HEK293 (cell line): ENCODE measurements at regions of chr17 and their contacts with region 1.

Region 1: DNA sequence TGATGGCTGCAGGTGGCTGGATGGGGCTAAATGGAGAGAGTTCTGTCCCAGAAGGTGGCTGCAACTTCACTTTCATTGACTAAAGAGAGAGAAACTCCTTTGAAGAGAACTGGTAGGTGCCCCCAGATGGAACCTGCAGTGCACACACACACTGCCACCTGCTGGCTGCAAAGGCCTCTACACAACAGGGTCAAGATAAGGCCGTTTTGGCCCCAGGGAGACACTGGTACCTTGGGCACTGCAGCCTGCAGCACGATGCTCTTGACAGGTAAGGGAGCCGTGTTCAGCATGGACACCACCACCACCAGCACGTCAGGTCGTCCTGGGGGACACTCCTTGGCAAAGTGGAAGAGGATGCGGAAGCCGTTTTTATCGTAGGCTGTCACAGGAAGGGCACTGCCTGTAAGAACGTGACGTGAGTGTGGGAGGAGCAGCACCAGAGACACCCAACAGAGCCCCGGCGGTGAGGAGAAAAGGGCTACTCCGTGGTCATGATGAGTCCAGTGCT is 22.7 kb downstream of the GGA3 start:
- H3K4me3 ChIP-seq: no peak overlapping the region
- H3K27ac ChIP-seq: no peak overlapping the region
- H3K4me1 ChIP-seq: no peaks in the 10 kb centered on the region
- CTCF ChIP-seq: peak; percentile 86

Region 2: DNA sequence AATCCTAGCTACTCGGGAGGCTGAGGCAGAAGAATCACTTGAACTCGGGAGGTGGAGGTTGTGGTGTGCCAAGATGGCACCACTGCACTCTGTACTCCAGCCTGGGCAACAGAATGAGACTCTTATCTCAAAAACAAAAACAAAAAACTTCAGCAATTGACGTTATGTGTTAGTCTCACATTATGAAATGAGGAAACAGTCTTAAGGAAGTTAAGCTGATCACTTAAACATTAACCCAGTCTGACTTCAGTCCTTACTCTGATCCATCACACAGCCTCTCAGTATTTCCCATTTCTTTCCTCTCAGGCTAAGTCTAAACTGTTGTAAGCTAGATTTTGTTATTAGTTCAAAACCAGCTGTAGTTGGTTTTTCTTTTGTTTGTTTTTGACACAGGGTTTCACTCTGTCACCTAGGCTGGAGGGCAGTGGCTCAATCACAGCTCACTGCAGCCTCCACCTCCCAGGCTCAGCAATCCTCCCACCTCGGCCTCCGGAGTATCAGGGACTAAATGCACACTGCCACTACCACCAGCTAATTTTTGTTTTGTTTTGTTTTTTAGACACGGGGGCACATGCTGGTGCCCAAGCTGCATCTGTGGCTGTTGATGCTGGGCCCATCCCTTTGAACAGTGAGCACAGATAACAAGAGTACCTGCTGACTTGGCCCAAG is 90.7 kb before region 1 on chr17:
- CTCF ChIA-PET with region 1: no interaction called
- POLR2A ChIA-PET with region 1: no interaction called
- H3K4me3 ChIP-seq: no peak overlapping the region
- H3K27ac ChIP-seq: no peak overlapping the region
- H3K4me1 ChIP-seq: peaks cover 4% of the 10 kb centered on the region; the same call in 1 of the 2 replicates
- CTCF ChIP-seq: no peak

Region 3: GRCh38 chr17:75219815-75220214 is 18.9 kb before region 1 on chr17:
- CTCF ChIA-PET with region 1: interaction called, 21 read pairs
- POLR2A ChIA-PET with region 1: interaction called, 3 read pairs
- H3K4me3 ChIP-seq: no peak overlapping the region
- H3K27ac ChIP-seq: no peak overlapping the region
- H3K4me1 ChIP-seq: no peaks in the 10 kb centered on the region
- CTCF ChIP-seq: no peak

Region 4: GRCh38 chr17:75228305-75228704 is 10.4 kb before region 1 on chr17:
- CTCF ChIA-PET with region 1: interaction called, 54 read pairs
- POLR2A ChIA-PET with region 1: interaction called, 16 read pairs
- H3K4me3 ChIP-seq: no peak overlapping the region
- H3K27ac ChIP-seq: no peak overlapping the region
- H3K4me1 ChIP-seq: no peaks in the 10 kb centered on the region
- CTCF ChIP-seq: no peak

Region 5: DNA sequence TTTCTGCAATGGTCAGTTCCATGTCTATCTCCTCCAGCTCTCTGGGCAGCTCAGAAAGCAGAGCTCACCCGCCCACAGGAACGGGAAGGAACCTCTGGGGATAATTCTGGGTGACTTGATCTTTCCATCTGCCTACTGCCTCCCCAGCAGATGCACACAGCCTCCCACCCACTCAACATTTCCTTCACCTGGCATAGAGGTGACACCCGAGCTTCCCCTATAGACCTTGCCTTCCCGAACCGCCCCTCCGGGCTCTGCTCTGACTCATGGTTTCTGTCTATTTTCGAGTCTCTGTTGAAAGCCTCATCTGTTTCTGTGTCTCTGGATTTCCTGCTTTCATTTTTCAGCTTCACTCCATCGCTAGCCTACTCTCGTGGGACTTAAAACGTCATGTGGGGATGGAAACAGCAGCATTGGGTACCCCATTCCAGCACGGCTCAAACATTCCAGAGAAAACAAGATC is 11.3 kb after region 1 on chr17:
- CTCF ChIA-PET with region 1: interaction called, 71 read pairs
- POLR2A ChIA-PET with region 1: interaction called, 4 read pairs
- H3K4me3 ChIP-seq: no peak overlapping the region
- H3K27ac ChIP-seq: peak overlapping the region; percentile 3; the same call in 1 of the 2 replicates
- H3K4me1 ChIP-seq: peaks cover 6% of the 10 kb centered on the region
- CTCF ChIP-seq: no peak

Region 6: DNA sequence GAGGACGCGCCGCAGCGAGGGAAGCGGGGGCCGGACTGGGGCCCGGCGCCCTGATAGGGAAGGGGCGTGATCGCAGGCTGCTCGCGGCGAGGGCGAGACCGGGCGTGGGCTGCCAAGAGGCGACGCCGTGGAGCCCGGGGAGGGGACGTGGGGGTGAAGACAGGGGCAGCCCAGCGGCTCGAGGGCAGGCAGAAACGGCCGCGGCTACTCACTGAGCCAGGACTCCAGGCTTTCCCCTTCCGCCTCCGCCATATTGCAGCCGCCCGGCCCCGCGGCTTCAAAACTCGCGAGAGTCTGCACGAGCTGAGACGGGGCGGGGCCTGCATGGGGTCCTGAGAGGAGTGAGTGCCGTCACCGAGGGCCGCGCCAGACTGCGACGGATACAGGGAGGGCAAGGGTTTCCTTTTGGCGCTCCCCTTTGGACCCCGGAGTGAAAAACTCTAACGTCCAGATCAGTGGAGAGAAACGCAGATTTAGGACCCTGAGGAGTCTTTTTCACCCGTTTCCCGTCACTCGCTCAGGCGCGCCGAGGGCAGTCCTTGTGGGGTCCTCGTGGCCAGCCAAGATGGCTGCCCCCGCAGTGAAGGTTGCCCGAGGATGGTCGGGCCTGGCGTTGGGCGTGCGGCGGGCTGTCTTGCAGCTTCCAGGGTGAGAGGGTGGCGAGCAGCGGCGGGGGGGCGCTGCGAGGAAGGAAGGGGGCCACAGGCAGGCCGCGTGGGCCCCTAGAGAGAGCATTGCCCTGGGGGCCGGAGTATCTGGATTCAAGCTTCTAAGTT is 22.8 kb after region 1 on chr17 and contains the starts of genes GGA3 and MRPS7:
- CTCF ChIA-PET with region 1: interaction called, 74 read pairs
- POLR2A ChIA-PET with region 1: interaction called, 26 read pairs
- H3K4me3 ChIP-seq: peak within 1 kb of the TSS; percentile 99
- H3K27ac ChIP-seq: peak within 1 kb of the TSS; percentile 99
- H3K4me1 ChIP-seq: peaks cover 5% of the 10 kb centered on the region; the same call in 1 of the 2 replicates
- CTCF ChIP-seq: peak; percentile 42; the same call in 1 of the 2 replicates

Region 7: DNA sequence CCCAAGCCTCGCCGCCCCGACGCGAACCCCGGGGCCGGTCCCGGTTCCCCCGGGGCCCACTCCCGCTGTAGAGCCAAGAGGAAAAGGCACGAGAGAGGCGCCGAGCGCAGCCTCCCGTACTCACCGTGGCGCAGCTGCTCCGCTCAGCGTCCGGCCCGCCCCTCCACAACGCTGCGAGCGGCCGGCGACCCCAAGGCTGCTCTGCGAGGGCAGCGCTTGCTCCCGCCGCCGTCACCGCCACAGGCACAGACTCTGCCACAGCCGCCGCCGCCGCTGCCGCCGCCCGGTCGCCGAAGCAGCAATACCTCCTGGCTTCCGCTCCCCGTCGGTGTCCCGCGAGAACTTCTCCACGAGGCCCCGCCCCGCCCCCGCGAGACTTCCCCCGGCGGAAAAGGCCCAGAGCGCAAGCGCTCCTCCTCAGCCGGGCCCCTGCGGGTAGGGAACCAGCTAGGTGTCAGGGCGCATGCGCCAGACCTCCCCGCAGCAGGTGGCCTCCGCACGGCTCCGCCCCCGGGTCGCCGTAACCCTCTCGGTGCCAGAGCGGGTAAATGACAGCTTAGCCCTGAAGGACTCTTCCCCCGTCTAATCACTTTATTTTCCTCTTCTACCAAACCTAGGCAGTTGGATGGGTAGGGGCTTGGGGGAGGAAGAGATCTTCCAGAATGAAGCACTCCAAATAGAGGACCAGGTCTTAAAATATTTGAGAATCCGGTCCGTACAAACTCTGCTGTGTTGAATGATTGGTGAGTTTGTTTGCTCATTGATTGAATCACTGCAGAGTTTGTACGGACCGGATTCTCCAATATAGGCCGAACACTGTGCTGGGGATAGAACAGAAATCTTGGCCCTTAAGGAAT is 166.9 kb after region 1 on chr17 and contains the start of gene GRB2:
- CTCF ChIA-PET with region 1: interaction called, 10 read pairs
- POLR2A ChIA-PET with region 1: interaction called, 3 read pairs
- H3K4me3 ChIP-seq: peak within 1 kb of the TSS; percentile 96
- H3K27ac ChIP-seq: peak within 1 kb of the TSS; percentile 94
- H3K4me1 ChIP-seq: 0 out of 2 replicates have a peak, but pooled peaks cover 8% of the 10 kb centered on the region
- CTCF ChIP-seq: no peak

Region 8: DNA sequence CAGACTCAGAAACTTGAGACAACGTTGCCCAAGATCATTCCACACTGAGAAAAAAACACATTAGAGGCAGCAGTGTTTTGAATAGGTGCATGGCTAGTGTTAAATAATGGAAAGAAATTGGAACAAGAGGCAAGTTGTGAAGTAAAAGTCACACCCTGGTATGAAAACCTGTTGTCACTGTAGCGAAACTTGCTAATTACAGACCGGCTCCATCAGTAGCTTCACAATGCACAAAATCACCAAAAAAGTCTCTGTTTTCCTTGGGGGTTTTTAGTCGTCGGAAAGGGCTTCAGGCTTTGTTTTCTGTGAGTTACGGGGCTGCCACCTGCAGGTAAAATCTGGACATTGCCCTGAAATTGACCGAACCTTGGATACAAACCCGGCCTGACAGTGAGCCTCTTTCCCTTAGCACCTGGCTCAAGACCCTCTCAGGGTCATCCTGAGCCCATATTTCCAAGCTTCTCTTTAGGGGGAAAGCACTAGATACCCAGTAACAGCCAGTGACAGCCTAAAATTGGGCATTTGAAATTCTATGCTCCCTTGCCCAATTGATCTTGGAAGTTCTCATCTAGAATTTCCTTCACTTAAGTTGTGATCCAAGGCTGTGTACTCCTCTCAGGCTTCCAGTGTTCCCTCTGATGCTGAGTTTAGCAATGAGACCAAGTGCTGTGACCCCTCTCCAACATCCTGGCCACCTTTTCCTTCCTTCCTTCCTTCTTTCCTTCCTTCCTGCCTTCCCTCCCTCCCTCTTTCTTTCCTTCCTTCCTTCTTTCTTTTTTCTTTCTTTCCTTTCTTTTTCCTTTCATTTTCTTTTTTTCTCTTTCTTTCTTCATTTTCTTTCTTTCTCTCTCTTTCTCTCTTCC is 173.9 kb after region 1 on chr17:
- CTCF ChIA-PET with region 1: interaction called, 21 read pairs
- POLR2A ChIA-PET with region 1: interaction called, 4 read pairs
- H3K4me3 ChIP-seq: no peak overlapping the region
- H3K27ac ChIP-seq: no peak overlapping the region
- H3K4me1 ChIP-seq: no peaks in the 10 kb centered on the region
- CTCF ChIP-seq: peak; percentile 81